AG04450 (cell line): ENCODE measurements at regions of chr19 and their contacts with region 1.

Region 1: GRCh38 chr19:5681391-5682106 is 722 bp downstream of the HSD11B1L start:
- DNase-seq: no peak
- H3K4me3 ChIP-seq: peak overlapping the region; percentile 96
- H3K27ac ChIP-seq: no peak overlapping the region
- H3K27me3 ChIP-seq: no peaks in the 10 kb centered on the region
- CTCF ChIP-seq: no peak

Region 2: DNA sequence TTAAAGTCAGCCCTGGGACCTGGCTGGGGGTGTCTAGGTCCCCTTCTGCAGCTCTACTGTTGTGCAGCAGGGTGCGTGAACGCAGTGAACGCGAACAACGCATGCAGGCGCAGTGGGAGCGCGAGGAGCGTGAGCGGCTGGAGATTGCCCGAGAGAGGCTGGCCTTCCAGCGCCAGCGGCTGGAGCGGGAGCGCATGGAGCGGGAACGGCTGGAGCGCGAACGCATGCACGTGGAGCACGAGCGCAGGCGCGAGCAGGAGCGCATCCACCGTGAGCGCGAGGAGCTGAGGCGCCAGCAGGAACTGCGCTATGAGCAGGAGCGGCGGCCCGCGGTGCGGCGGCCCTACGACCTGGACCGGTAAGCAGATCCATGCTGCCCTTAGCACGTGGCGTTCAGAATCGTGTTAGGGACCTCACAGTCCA is 20.1 kb before region 1 on chr19:
- CTCF ChIA-PET with region 1: interaction called, 3 read pairs
- POLR2A ChIA-PET with region 1: interaction called, 10 read pairs
- DNase-seq: no peak
- H3K4me3 ChIP-seq: no peak overlapping the region
- H3K27ac ChIP-seq: no peak overlapping the region
- H3K27me3 ChIP-seq: no peaks in the 10 kb centered on the region
- CTCF ChIP-seq: no peak

Region 3: DNA sequence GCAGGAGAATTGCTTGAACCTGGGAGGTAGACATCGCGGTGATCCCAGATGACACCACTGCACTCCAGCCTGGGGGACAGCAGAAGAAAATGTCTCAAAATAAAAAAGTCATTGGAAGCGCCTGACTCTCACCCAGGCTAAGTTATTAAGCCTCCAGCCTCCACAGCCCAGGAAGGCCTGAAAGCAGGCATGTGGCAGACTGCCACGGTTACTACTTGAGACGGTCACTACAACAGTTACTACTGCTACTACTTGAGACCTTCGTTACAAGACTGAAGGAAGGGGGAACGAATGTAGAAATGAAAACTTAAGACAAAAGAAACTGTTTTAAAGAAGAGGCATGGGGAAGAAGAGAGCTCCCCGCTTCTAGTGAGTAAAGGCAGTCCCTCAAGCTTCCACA is 93.4 kb after region 1 on chr19:
- CTCF ChIA-PET with region 1: no interaction called
- POLR2A ChIA-PET with region 1: no interaction called
- DNase-seq: no peak
- H3K4me3 ChIP-seq: no peak overlapping the region
- H3K27ac ChIP-seq: no peak overlapping the region
- H3K27me3 ChIP-seq: peaks cover 4% of the 10 kb centered on the region
- CTCF ChIP-seq: no peak